CD4-positive, alpha-beta T cell (primary cell): ENCODE measurements at regions of chr3 and their contacts with region 1.

Region 1: GRCh38 chr3:30751610-30752299 is 142.7 kb downstream of the GADL1 start:
- DNase-seq: peak; percentile 33 to 72 (median 50)
- ATAC-seq: peak; percentile 63
- H3K4me3 ChIP-seq: no peak overlapping the region
- H3K4me3 Mint-ChIP-seq: no peak overlapping the region
- H3K27ac ChIP-seq: no peak overlapping the region
- H3K27ac Mint-ChIP-seq: no peak overlapping the region
- H3K4me1 ChIP-seq: no peaks in the 10 kb centered on the region
- H3K4me1 Mint-ChIP-seq: peaks cover 13% of the 10 kb centered on the region
- H3K27me3 ChIP-seq: no peaks in the 10 kb centered on the region
- H3K27me3 Mint-ChIP-seq: no peaks in the 10 kb centered on the region
- CTCF ChIP-seq: peak; percentile 73

Region 2: DNA sequence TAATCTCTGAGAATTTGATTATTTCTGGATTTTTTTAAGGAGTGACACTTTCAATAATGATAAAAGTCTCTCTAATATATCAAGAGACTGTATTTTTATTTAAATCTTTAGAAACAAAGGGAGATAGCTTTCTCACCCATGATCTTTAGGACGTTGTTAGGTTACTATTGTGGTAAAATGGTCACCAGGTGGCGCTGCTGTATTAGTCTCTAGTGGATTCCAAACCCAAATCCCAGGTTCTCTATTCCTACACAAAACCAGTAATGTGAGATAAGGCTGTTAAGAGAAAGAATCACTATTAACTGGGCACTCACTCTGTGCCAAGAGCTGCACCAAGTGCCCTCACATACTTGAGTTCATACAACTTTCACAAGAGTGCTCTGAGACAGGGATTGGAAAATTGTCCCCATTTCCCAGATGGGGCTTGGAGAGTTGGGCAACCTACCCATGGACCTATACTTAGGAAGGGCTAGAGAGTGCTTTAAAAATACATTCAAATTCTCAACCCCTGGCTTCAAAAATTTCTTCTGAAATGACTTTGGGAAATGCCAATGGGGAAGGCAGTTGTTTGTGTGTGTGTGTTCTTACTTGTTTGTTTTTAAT is 738.7 kb before region 1 on chr3:
- CTCF ChIA-PET with region 1: no interaction called
- POLR2A ChIA-PET with region 1: no interaction called
- intact Hi-C with region 1: loop called (anchors 1 to 2 kb)
- DNase-seq: peak in 13 of 14 experiments; percentile 2 to 67 (median 31)
- ATAC-seq: peak; percentile 48
- H3K4me3 ChIP-seq: no peak overlapping the region
- H3K4me3 Mint-ChIP-seq: no peak overlapping the region
- H3K27ac ChIP-seq: no peak overlapping the region
- H3K27ac Mint-ChIP-seq: no peak overlapping the region
- H3K4me1 ChIP-seq: no peaks in the 10 kb centered on the region
- H3K4me1 Mint-ChIP-seq: no peaks in the 10 kb centered on the region
- H3K27me3 ChIP-seq: no peaks in the 10 kb centered on the region
- H3K27me3 Mint-ChIP-seq: no peaks in the 10 kb centered on the region
- CTCF ChIP-seq: peak; percentile 65

Region 3: GRCh38 chr3:30042274-30042859 is 709.4 kb before region 1 on chr3:
- CTCF ChIA-PET with region 1: interaction called, 15 read pairs
- POLR2A ChIA-PET with region 1: no interaction called
- intact Hi-C with region 1: loop called (anchors 1 kb)
- DNase-seq: peak; percentile 24 to 76 (median 48)
- ATAC-seq: peak; percentile 66
- H3K4me3 ChIP-seq: no peak overlapping the region
- H3K4me3 Mint-ChIP-seq: no peak overlapping the region
- H3K27ac ChIP-seq: no peak overlapping the region
- H3K27ac Mint-ChIP-seq: no peak overlapping the region
- H3K4me1 ChIP-seq: no peaks in the 10 kb centered on the region
- H3K4me1 Mint-ChIP-seq: peaks cover 6% of the 10 kb centered on the region
- H3K27me3 ChIP-seq: peaks cover 0 to 4% of the 10 kb centered on the region in 2 experiments
- H3K27me3 Mint-ChIP-seq: peaks cover 36% of the 10 kb centered on the region
- CTCF ChIP-seq: peak; percentile 69

Region 4: DNA sequence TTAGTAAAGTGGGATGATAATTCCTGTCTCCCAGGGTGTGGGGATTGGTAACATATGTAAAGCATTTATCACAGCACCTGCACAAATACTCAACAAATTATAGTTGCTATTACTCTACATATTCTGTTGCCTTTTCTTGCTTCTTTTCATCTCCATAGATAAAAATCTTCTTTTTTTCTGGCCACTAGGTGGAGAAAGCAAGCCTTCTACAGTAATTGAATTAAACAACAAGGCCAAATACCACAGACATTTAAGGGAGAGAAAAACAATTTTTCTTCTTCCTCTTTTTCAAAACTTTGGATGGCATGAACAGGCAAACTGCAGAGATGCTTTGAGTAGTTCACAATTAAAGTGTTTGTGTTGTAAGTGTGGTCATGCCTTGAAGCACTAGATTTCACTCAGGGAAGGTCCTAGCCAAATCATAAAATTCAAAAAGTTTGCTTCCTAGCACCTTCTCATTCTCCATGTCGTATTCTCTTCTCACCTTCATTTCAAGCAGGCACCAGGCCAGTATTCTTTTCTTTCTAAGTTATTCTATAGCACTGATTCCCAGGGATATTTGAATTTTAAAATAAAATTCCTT is 638.8 kb before region 1 on chr3:
- CTCF ChIA-PET with region 1: interaction called, 5 read pairs
- POLR2A ChIA-PET with region 1: interaction called, 3 read pairs
- intact Hi-C with region 1: loop called (anchors 1 to 2 kb)
- DNase-seq: peak in 3 of 14 experiments; percentile 56 to 57 (median 57)
- ATAC-seq: no peak
- H3K4me3 ChIP-seq: no peak overlapping the region
- H3K4me3 Mint-ChIP-seq: no peak overlapping the region
- H3K27ac ChIP-seq: no peak overlapping the region
- H3K27ac Mint-ChIP-seq: no peak overlapping the region
- H3K4me1 ChIP-seq: no peaks in the 10 kb centered on the region
- H3K4me1 Mint-ChIP-seq: peaks cover 7% of the 10 kb centered on the region
- H3K27me3 ChIP-seq: no peaks in the 10 kb centered on the region
- H3K27me3 Mint-ChIP-seq: peaks cover 5% of the 10 kb centered on the region
- CTCF ChIP-seq: peak; percentile 73

Region 5: GRCh38 chr3:30199096-30199759 is 552.5 kb before region 1 on chr3:
- CTCF ChIA-PET with region 1: interaction called, 6 read pairs
- POLR2A ChIA-PET with region 1: interaction called, 3 read pairs
- intact Hi-C with region 1: loop called in 1 of 2 experiments (anchors 5 kb)
- DNase-seq: peak; percentile 49 to 80 (median 59)
- ATAC-seq: peak; percentile 37
- H3K4me3 ChIP-seq: no peak overlapping the region
- H3K4me3 Mint-ChIP-seq: no peak overlapping the region
- H3K27ac ChIP-seq: no peak overlapping the region
- H3K27ac Mint-ChIP-seq: no peak overlapping the region
- H3K4me1 ChIP-seq: no peaks in the 10 kb centered on the region
- H3K4me1 Mint-ChIP-seq: peaks cover 5% of the 10 kb centered on the region
- H3K27me3 ChIP-seq: no peaks in the 10 kb centered on the region
- H3K27me3 Mint-ChIP-seq: no peaks in the 10 kb centered on the region
- CTCF ChIP-seq: peak; percentile 85